ENCODE measurements at regions of chr12 and their contacts with region 1.

Region 1: GRCh38 chr12:111488271-111488670 is 82.5 kb downstream of the SH2B3 start:
- DNase-seq: no peak
- ATAC-seq: no peak
- H3K4me3 Mint-ChIP-seq: no peak overlapping the region
- H3K27ac Mint-ChIP-seq: no peak overlapping the region
- H3K4me1 Mint-ChIP-seq: no peaks in the 10 kb centered on the region
- H3K27me3 Mint-ChIP-seq: no peaks in the 10 kb centered on the region
- CTCF ChIP-seq: no peak

Region 2: GRCh38 chr12:111529424-111530368 is 41.4 kb after region 1 on chr12:
- CTCF ChIA-PET with region 1: no interaction called
- POLR2A ChIA-PET with region 1: interaction called, 11 read pairs
- intact Hi-C with region 1: no loop called
- DNase-seq: peak; percentile 41
- ATAC-seq: peak; percentile 86
- H3K4me3 Mint-ChIP-seq: no peak overlapping the region
- H3K27ac Mint-ChIP-seq: no peak overlapping the region
- H3K4me1 Mint-ChIP-seq: no peaks in the 10 kb centered on the region
- H3K27me3 Mint-ChIP-seq: no peaks in the 10 kb centered on the region
- CTCF ChIP-seq: no peak